ENCODE measurements at regions of chr16 and their contacts with region 1.

Region 1: GRCh38 chr16:87778830-87779579 is 13.2 kb upstream of the KLHDC4 start:
- DNase-seq: peak; percentile 87
- H3K4me3 ChIP-seq: no peak overlapping the region
- H3K27ac ChIP-seq: no peak overlapping the region
- H3K4me1 ChIP-seq: peaks cover 14% of the 10 kb centered on the region
- H3K27me3 ChIP-seq: peaks cover 38% of the 10 kb centered on the region
- CTCF ChIP-seq: peak; percentile 97

Region 2: GRCh38 chr16:87598431-87598830 is 180.6 kb before region 1 on chr16:
- intact Hi-C with region 1: loop called (anchors 10 kb)
- DNase-seq: no peak
- H3K4me3 ChIP-seq: no peak overlapping the region
- H3K27ac ChIP-seq: no peak overlapping the region
- H3K4me1 ChIP-seq: peaks cover 8% of the 10 kb centered on the region
- H3K27me3 ChIP-seq: peaks cover 90% of the 10 kb centered on the region
- CTCF ChIP-seq: no peak

Region 3: DNA sequence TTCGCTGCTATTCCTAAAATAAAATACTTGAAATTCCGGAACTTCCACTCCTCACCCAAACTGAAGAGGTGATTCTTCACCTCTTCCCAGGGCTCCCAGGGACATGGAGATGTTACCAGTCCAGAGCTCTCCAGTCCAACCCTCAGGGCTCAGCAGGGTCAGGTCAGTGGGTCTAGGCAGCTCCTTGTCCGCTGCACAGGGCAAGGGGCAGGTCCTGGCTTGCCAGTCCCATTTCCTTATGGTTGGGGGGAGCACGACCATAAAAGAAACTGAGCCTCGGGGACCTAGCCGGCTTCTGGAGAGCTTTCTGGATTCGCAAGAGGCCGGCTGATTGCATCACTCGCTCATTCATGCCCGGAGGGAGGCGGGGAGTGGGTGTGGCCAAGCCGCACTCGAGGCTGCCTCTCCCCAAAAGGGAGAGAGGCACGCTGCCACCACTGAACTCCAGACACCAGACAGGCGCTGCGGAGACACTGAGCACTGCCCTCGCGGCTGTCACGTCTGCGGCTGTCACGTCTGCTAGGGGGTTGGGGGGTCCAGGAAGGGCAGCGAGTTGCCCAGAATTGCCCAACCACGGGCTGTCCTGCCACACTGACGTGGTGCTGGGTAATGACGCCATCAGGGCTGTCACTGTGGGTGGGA is 74.5 kb after region 1 on chr16:
- intact Hi-C with region 1: no loop called
- DNase-seq: peak; percentile 94
- H3K4me3 ChIP-seq: peak overlapping the region; percentile 51
- H3K27ac ChIP-seq: peak overlapping the region; percentile 66
- H3K4me1 ChIP-seq: peaks cover 49% of the 10 kb centered on the region
- H3K27me3 ChIP-seq: peaks cover 4% of the 10 kb centered on the region
- CTCF ChIP-seq: no peak

Region 4: GRCh38 chr16:87874639-87875465 is 95.8 kb after region 1 on chr16:
- intact Hi-C with region 1: loop called (anchors 5 kb)
- DNase-seq: no peak
- H3K4me3 ChIP-seq: no peak overlapping the region
- H3K27ac ChIP-seq: no peak overlapping the region
- H3K4me1 ChIP-seq: peaks cover 7% of the 10 kb centered on the region
- H3K27me3 ChIP-seq: peaks cover 58% of the 10 kb centered on the region
- CTCF ChIP-seq: no peak